ENCODE measurements at regions of chr4 and their contacts with region 1.

Region 1: DNA sequence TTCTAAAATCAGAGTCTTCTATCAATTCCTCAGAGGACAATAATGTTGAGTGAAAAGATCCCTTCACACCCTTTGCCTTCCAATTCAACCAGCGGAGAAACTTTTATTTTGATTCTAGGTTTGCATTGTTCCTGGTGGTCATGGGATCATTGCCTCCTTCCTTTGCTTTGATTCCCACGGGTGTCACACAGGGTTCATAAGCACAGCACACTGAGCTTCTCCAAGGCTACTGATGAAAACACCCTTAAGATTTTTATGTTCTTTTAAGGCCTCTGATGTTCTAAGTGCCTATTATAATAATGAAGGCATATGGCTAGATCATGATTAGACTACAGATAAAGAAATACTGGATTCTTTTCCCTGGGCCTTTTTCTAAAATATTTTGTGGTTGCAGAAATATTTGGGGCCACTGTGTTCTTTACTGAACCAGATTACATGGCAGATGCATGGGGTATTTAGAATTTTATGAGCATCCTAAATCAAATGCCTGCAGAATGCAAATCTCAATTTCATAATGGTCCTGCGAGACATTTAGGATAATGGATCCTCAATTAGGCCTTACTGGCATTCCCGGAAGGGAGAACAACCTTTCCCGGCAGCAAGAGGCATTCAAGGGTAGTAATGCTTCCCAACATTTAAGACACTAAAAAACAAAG is 43.9 kb upstream of the FGFBP2 start:
- DNase-seq: no peak
- H3K4me3 Mint-ChIP-seq: no peak overlapping the region
- H3K27ac Mint-ChIP-seq: no peak overlapping the region
- H3K4me1 Mint-ChIP-seq: no peaks in the 10 kb centered on the region
- H3K27me3 Mint-ChIP-seq: peaks cover 15% of the 10 kb centered on the region

Region 2: DNA sequence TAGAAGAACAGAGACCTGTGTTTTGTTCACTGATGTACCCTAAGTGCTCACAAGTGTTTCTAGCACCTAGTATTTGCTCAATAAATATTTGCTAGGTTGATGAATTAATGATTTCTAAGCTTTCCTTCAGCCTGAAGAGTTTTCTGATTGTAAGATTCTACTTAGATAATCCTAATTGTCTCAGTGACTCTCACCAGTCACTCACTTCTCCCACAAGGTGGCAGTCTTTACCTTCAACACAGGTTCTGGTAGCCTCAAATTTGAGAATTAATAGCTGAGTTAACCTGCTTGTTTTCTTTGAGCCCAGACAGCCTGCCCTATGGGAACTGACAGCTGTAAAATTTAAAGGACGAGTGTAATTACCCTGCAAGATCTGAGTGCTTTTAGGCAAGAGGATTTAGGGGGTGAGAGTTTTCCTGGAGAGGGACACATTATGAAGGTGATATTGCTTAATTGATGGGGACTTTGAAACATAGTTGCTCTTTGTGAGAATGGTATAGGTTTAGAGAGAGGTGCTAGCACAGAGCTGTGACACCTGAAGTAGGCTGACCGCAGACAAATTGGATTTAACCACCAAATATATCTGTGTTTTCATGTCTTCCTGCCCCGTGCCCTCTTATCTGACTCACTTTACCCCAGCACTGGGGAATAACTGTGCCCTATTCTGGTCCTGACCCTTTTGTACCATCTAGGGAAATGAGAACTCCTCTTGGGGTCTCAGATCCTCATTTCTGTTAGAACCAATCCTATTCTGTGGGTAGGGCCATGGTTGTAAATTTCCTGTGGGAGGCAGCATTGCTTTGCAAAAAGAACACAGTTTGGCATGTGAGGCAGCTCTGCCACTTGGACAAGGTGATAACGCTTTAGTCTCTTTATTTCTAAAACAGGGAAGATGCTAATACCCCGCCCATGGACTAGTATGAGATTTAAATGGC is 201.1 kb before region 1 on chr4:
- CTCF ChIA-PET with region 1: interaction called, 52 read pairs
- POLR2A ChIA-PET with region 1: no interaction called
- intact Hi-C with region 1: no loop called
- DNase-seq: peak; percentile 43
- H3K4me3 Mint-ChIP-seq: no peak overlapping the region
- H3K27ac Mint-ChIP-seq: no peak overlapping the region
- H3K4me1 Mint-ChIP-seq: peaks cover 12% of the 10 kb centered on the region
- H3K27me3 Mint-ChIP-seq: no peaks in the 10 kb centered on the region

Region 3: DNA sequence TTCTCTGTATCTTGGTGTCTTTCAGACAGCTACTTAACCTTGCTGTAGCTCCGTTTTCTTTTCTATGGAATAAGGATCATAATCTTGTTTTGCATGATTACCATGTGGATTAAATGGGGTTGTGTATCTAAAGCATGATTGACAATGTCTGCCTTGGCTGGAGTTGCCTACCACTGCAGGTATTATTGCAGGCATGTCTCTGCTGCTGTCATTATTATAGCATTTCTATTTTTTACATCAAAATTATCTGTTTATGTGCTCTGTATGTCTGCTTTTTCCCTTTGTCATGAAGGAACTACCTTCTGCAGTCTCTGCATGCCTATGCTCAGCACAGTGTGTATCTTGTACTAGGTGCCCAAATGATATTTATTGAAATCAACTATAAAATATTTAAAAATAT is 315.3 kb after region 1 on chr4:
- CTCF ChIA-PET with region 1: no interaction called
- POLR2A ChIA-PET with region 1: no interaction called
- intact Hi-C with region 1: no loop called
- DNase-seq: no peak
- H3K4me3 Mint-ChIP-seq: no peak overlapping the region
- H3K27ac Mint-ChIP-seq: no peak overlapping the region
- H3K4me1 Mint-ChIP-seq: no peaks in the 10 kb centered on the region
- H3K27me3 Mint-ChIP-seq: peaks cover 6% of the 10 kb centered on the region

Measured in activated CD4-positive, alpha-beta memory T cell treated with anti-CD3 and anti-CD28 coated beads for 36 hours (primary cell).